Activated naive CD4-positive, alpha-beta T cell treated with anti-CD3 and anti-CD28 coated beads for 36 hours (primary cell): ENCODE measurements at regions of chr2 and their contacts with region 1.

Region 1: GRCh38 chr2:42102024-42102590 is 54.3 kb downstream of the PKDCC start:
- DNase-seq: peak; percentile 86
- H3K4me3 Mint-ChIP-seq: peak overlapping the region; percentile 70
- H3K27ac Mint-ChIP-seq: peak overlapping the region; percentile 88
- H3K4me1 Mint-ChIP-seq: peaks cover 55% of the 10 kb centered on the region
- H3K27me3 Mint-ChIP-seq: no peaks in the 10 kb centered on the region

Region 2: GRCh38 chr2:42086500-42086953 is 15.6 kb before region 1 on chr2:
- CTCF ChIA-PET with region 1: interaction called, 10 read pairs
- intact Hi-C with region 1: no loop called
- DNase-seq: peak; percentile 59
- H3K4me3 Mint-ChIP-seq: no peak overlapping the region
- H3K27ac Mint-ChIP-seq: no peak overlapping the region
- H3K4me1 Mint-ChIP-seq: peaks cover 4% of the 10 kb centered on the region
- H3K27me3 Mint-ChIP-seq: no peaks in the 10 kb centered on the region

Region 3: GRCh38 chr2:42127425-42128424 is 25.6 kb after region 1 on chr2:
- CTCF ChIA-PET with region 1: interaction called, 17 read pairs
- intact Hi-C with region 1: loop called (anchors 1 kb)
- DNase-seq: peak; percentile 45
- H3K4me3 Mint-ChIP-seq: peak overlapping the region; percentile 51
- H3K27ac Mint-ChIP-seq: peak overlapping the region; percentile 65
- H3K4me1 Mint-ChIP-seq: peaks cover 87% of the 10 kb centered on the region
- H3K27me3 Mint-ChIP-seq: no peaks in the 10 kb centered on the region

Region 4: DNA sequence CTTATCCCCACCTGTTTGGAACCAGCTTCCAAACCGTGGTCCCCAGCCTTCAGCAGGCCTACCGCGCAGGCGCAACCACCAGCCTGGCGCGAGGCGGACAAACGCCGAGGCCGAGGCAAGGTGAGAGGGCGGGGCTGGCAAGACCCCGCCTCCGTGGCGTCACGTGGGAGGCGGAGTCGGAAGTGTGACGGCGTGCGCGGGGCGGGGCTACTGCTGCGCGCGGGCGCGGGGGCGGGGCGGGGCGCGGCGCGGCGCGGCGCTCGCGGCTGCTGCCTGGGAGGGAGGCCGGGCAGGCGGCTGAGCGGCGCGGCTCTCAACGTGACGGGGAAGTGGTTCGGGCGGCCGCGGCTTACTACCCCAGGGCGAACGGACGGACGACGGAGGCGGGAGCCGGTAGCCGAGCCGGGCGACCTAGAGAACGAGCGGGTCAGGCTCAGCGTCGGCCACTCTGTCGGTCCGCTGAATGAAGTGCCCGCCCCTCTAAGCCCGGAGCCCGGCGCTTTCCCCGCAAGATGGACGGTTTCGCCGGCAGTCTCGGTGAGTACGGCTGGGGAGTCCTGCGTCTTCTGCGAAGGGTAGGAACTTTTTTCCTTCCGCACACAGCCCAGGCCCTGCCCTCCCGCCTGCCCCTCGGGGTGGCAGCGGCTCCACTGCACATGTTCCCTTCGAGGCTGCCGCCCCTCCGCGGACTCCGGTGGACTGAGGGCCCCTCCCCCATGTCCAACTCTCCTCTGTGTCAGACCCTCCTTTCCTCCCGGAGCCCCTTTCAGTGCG is 67.2 kb after region 1 on chr2 and contains the start of gene EML4:
- CTCF ChIA-PET with region 1: interaction called, 8 read pairs
- intact Hi-C with region 1: loop called (anchors 1 kb)
- DNase-seq: peak; percentile 89
- H3K4me3 Mint-ChIP-seq: no peak within 1 kb of the TSS
- H3K27ac Mint-ChIP-seq: peak within 1 kb of the TSS; percentile 70
- H3K4me1 Mint-ChIP-seq: peaks cover 24% of the 10 kb centered on the region
- H3K27me3 Mint-ChIP-seq: no peaks in the 10 kb centered on the region
- total RNA-seq, gene EML4: 65.8 to 65.9 TPM

Region 5: GRCh38 chr2:42810121-42810970 is 708.2 kb after region 1 on chr2:
- CTCF ChIA-PET with region 1: no interaction called
- intact Hi-C with region 1: loop called (anchors 10 kb)
- DNase-seq: peak; percentile 96
- H3K4me3 Mint-ChIP-seq: peak overlapping the region; percentile 88
- H3K27ac Mint-ChIP-seq: peak overlapping the region; percentile 93
- H3K4me1 Mint-ChIP-seq: peaks cover 11% of the 10 kb centered on the region
- H3K27me3 Mint-ChIP-seq: no peaks in the 10 kb centered on the region